Panc1 (cell line): ENCODE measurements at regions of chr7 and their contacts with region 1.

Region 1: GRCh38 chr7:43439631-43440401 is 143.1 kb upstream of the STK17A start:
- DNase-seq: peak; percentile 43
- ATAC-seq: peak; percentile 89
- H3K4me3 ChIP-seq: no peak overlapping the region
- H3K27ac ChIP-seq: no peak overlapping the region
- H3K4me1 ChIP-seq: no peaks in the 10 kb centered on the region
- H3K27me3 ChIP-seq: peaks cover 16% of the 10 kb centered on the region
- CTCF ChIP-seq: peak; percentile 94

Region 2: DNA sequence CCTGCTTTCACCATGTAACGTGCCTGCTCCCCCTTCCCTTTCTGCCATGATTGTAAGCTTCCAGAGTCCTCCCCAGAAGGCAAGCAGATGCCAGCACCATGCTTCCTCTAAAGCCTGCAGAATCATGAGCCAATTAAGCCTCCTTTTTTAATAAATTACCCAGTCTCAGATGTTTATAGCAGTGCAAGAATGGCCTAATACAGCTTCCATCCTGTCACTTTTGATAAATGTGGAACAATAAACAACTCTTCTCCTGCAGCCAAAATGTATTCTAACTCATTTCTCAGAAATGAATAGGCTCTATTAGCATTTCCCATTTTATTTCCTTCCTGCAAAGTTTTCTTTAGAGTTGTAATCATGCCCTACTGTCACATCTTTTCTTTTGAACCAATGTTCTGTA is 571.3 kb before region 1 on chr7:
- CTCF ChIA-PET with region 1: interaction called, 16 read pairs
- POLR2A ChIA-PET with region 1: no interaction called
- in situ Hi-C with region 1: no loop called
- intact Hi-C with region 1: no loop called
- DNase-seq: no peak
- ATAC-seq: no peak
- H3K4me3 ChIP-seq: no peak overlapping the region
- H3K27ac ChIP-seq: no peak overlapping the region
- H3K4me1 ChIP-seq: no peaks in the 10 kb centered on the region
- H3K27me3 ChIP-seq: no peaks in the 10 kb centered on the region
- CTCF ChIP-seq: no peak